Activated naive CD4-positive, alpha-beta T cell treated with anti-CD3 and anti-CD28 coated beads, Interleukin-2, amount 10 ng/mL, durations not matched to agents 7 days and 5 days (primary cell): ENCODE measurements at regions of chr18 and their contacts with region 1.

Region 1: GRCh38 chr18:2985628-2986027 is 27.3 kb downstream of the LPIN2 start:
- DNase-seq: no peak
- H3K4me3 Mint-ChIP-seq: no peak overlapping the region
- H3K27ac Mint-ChIP-seq: no peak overlapping the region
- H3K4me1 Mint-ChIP-seq: peaks cover 76% of the 10 kb centered on the region
- H3K27me3 Mint-ChIP-seq: no peaks in the 10 kb centered on the region

Region 2: DNA sequence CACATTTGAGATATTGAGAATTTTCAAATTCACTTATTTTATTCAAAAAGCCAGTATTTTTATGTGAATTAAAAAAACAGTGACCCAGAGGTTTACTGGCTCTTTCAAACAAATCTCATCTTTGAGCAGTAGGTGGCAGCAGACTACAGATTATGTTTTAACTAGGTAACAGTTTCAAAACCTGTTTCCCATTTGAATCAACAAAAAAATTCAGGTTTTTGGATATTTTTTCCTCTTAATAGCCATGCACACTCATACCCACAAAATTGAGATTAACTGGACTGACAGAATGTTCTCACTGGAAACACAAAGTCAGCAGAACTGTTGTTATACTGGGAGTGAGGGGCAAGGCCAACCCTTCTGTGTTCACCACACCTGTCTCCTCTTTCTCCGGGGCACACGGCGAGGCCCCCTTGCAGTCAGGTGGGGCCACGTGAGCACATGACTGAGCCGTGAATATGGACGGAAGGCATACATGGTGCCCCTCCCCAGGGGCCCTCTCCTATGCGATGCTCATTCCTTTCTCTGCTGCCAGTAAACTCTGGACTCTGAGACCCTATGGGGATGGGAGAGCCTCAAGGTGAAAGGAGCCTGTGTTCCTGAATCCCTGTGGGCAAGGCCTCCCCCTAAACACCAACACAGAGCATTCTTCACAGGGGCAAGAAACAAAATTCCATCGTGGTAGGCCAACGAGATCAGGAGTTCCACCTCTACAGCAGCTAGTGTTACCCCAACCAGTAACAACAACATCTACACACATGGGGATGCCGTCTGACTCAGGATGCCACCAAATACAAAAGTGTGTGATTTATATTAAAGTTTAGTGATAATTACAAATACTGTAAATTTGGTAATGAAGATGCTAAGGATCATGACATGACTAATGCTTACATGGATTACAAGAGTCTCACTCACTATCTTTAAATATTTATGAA is 53.1 kb before region 1 on chr18:
- CTCF ChIA-PET with region 1: interaction called, 187 read pairs
- DNase-seq: peak; percentile 54
- H3K4me3 Mint-ChIP-seq: no peak overlapping the region
- H3K27ac Mint-ChIP-seq: peak overlapping the region; percentile 57
- H3K4me1 Mint-ChIP-seq: peaks cover 23% of the 10 kb centered on the region
- H3K27me3 Mint-ChIP-seq: no peaks in the 10 kb centered on the region

Region 3: GRCh38 chr18:2948038-2948437 is 37.6 kb before region 1 on chr18:
- CTCF ChIA-PET with region 1: interaction called, 37 read pairs
- DNase-seq: no peak
- H3K4me3 Mint-ChIP-seq: no peak overlapping the region
- H3K27ac Mint-ChIP-seq: peak overlapping the region; percentile 53
- H3K4me1 Mint-ChIP-seq: peaks cover 41% of the 10 kb centered on the region
- H3K27me3 Mint-ChIP-seq: no peaks in the 10 kb centered on the region

Region 4: DNA sequence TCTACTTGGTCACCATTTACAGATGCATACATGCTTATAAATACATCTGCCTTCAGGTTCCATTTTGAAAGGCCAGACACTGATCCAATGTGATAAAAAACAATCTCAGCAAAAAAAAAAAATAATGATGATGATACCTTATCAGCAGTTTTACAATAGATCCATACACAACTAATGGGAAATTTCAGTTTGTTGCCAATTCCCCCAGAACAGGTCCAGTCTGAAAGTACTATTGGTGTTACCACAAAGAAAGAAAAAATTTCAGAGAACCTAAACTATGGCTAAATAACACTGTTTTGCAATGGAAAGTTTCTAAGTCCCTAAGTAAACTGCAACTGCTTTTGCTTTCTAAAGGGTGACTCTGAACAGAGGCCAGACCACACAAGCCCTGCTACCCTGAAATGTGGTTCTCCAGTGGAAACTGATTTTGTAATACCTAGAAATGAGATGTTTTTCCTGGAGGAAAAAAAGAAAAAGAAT is 26.8 kb before region 1 on chr18:
- CTCF ChIA-PET with region 1: interaction called, 27 read pairs
- DNase-seq: peak; percentile 74
- H3K4me3 Mint-ChIP-seq: peak overlapping the region; percentile 72
- H3K27ac Mint-ChIP-seq: peak overlapping the region; percentile 99
- H3K4me1 Mint-ChIP-seq: peaks cover 96% of the 10 kb centered on the region
- H3K27me3 Mint-ChIP-seq: no peaks in the 10 kb centered on the region

Region 5: DNA sequence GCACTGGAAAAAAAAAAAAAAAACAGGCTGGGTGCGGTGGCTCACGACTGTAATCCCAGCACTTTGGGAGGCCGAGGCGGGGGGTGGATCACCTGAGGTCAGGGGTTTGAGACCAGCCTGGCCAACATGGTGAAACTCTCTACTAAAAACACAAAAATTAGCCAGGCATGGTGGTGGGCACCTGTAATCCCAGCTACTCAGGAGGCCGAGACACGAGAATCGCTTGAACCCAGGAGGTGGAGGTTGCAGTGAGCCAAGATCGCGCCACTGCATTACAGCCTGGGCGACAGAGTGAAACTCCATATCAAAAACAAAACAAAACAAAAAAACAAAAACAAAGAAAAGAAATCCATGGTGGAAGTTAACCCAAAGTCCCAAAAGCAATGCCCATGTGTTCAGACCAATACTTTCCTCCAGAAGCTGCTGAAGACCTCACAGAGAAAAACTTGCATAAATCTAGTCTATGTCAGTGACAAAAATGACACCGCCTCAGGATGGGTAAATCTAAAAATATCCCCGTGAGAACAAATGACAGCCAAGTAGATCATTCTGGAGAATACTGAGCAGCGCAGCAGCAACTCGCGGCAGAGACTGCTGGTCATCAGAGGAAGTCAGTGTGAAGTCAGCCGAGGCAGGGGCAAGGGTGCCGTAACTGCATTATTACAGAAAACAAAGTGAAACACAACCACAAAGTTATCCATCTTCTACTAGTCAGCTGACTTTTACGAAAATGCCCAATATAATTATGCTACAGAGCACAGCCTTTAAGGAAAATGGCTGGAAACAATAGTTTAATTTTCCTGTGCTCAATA is 13.7 kb before region 1 on chr18:
- CTCF ChIA-PET with region 1: interaction called, 20 read pairs
- DNase-seq: peak; percentile 81
- H3K4me3 Mint-ChIP-seq: peak overlapping the region; percentile 73
- H3K27ac Mint-ChIP-seq: peak overlapping the region; percentile 96
- H3K4me1 Mint-ChIP-seq: peaks cover 92% of the 10 kb centered on the region
- H3K27me3 Mint-ChIP-seq: no peaks in the 10 kb centered on the region

Region 6: DNA sequence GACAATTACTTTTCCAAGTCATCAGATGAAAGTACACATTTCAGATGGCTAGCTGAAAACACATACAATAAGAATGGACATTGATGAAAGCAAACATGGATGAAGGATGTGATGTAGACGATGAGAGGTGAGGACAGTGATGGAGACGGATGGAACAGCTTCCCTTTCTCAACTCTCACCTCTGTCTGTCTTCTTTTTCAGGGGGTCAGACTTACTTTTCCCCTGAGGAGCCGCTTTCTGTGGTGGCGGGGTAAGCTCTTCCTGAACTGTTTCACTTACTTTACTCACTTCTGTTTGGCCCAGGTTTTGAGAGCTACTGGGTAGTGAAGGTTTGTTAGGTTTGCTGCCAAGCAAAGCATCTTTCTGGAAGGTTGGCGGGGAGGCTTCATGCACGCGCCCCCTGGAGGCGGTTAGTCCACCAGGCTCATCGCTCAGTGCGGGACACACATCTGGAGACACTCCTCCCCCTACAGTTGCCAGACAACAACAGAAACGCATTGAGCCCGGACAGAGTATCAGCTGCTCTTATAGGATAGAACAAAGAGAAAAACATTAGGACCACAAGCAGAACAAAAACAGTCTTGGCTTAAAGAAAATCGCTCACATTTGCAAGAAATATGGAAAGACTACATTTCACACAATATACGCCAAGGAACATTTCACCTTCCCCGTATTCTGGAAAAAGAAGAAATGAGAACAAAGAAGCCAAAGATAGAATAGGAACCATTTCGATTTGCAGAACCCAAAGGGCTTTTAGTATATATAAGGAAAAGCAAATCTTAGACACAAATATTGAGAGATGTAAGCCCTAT is 143.6 kb after region 1 on chr18:
- CTCF ChIA-PET with region 1: interaction called, 15 read pairs
- DNase-seq: peak; percentile 89
- H3K4me3 Mint-ChIP-seq: no peak overlapping the region
- H3K27ac Mint-ChIP-seq: no peak overlapping the region
- H3K4me1 Mint-ChIP-seq: peaks cover 10% of the 10 kb centered on the region
- H3K27me3 Mint-ChIP-seq: peaks cover 3% of the 10 kb centered on the region

Region 7: DNA sequence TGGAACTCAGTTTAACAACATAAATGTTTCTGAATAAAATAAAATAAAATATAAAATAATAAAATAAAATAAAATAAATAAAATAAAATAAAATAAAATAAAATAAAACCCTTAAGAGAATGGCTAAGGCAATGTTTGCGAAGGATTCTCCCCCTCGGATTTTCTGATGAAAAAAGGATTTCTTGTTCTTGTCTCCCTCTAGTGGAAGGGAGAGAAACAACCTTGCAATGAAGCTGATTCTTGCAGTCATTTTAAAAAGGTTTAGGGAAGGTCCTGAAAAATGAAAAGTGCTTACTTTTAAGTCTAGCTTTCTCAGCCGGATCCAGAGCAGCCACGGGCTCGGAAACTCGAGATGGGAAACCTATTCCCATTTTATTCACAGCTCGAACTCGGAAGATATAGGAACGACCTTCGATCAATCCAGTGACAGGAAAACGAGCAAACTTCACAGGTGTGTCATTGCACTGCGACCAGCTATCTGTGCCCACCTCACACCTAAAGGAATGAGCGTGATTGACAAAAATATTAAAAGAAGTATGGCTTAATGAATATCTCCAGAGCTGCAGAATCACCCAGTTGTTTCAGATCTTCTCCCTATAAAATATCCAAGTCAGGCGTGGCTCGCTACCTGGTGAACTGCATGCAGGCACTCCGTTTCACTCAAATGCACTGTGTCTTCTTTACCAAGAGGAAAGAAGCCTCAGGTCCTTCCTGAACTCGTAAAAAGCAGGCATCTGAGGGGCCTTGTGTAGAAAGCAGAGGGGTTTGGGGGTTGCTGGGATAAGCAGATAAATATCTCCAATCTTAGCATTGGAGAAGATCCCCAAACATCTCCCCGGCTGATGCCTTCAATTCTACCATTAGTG is 166.0 kb after region 1 on chr18:
- CTCF ChIA-PET with region 1: interaction called, 13 read pairs
- DNase-seq: no peak
- H3K4me3 Mint-ChIP-seq: no peak overlapping the region
- H3K27ac Mint-ChIP-seq: no peak overlapping the region
- H3K4me1 Mint-ChIP-seq: peaks cover 6% of the 10 kb centered on the region
- H3K27me3 Mint-ChIP-seq: peaks cover 7% of the 10 kb centered on the region

Region 8: GRCh38 chr18:3207565-3207964 is 221.9 kb after region 1 on chr18:
- CTCF ChIA-PET with region 1: no interaction called
- DNase-seq: no peak
- H3K4me3 Mint-ChIP-seq: no peak overlapping the region
- H3K27ac Mint-ChIP-seq: no peak overlapping the region
- H3K4me1 Mint-ChIP-seq: no peaks in the 10 kb centered on the region
- H3K27me3 Mint-ChIP-seq: no peaks in the 10 kb centered on the region

Region 9: DNA sequence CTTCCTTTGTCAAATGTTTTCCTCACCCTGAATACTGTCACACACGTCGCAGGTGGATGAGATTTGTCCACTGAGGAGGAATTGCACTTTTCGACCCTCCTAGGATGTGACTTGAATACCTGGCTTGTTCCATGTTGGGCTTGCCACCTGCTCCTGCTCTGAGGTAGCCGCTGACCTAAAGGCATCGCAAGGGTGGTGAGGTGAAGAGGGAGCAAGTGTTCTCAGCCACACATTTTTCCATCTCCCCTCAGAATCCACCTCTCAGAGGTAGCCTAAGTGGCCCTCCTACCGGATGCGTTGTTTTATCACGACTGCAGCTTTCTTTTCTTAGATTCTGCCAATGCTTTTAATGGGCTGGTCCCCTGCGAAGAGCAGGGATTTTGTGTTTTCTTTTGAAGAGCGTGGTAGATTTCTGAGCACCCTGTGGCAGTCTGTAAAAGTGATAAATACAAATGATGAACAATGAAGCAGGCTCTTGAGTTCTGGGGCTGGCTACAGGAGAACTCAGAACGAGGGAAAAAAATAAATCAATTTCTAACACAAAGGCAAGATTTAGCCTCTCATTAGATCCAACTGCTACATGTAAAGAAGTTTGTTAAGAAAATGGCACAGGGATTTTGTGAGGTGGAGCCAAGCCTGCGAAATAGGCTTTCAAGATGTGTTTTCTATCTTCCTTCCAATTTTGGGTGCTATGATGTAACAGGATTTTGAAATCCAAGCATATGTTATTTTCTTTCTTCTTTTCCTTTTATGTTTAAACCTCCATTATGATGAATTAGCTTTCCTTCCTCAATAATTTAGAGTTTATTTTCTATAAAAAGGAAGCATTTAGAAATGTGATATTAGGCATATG is 851.1 kb after region 1 on chr18:
- CTCF ChIA-PET with region 1: no interaction called
- DNase-seq: no peak
- H3K4me3 Mint-ChIP-seq: no peak overlapping the region
- H3K27ac Mint-ChIP-seq: no peak overlapping the region
- H3K4me1 Mint-ChIP-seq: no peaks in the 10 kb centered on the region
- H3K27me3 Mint-ChIP-seq: peaks cover 7% of the 10 kb centered on the region